Esophagus muscularis mucosa (tissue), 4 donors: ENCODE measurements at regions of chr6 and their contacts with region 1.

Region 1: DNA sequence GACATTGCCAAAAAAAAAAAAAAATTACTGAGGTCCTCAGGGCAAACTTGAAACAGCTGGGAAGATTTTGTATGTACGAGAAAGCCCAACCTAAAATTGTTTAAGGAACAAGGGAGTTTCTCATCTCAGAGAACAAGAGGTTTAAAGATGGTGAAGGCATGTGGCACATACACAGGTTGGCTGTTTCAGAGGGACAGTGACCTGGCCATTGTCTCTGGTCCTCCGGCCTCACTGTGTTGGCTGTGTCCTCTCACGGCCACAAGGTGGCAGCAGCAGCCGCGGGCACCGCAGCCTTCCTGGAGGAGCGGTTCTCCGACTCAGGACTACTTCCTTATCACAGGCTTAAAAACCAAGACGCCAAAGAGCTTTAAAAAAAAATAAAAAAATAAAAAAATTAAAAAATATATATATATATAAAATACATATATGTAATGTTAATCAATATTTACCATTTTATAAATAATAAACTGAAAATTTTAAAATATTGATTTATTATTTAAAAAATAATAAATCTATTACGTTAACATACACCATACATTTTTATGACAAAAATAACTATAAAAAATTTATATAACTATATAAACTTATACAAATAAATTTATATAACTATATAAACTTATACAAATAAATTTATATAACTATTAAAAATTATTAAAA is 52.8 kb downstream of the GTF2H5 start:
- DNase-seq: no peak
- H3K4me3 ChIP-seq: no peak overlapping the region
- H3K27ac ChIP-seq: no peak overlapping the region
- H3K4me1 ChIP-seq: no peaks in the 10 kb centered on the region
- H3K27me3 ChIP-seq: no peaks in the 10 kb centered on the region
- CTCF ChIP-seq: peak; percentile 90 to 94 (median 94)
- EP300 ChIP-seq: no peak
- POLR2A ChIP-seq: no peak

Region 2: GRCh38 chr6:158417760-158418098 is 196.8 kb after region 1 on chr6:
- intact Hi-C with region 1: no loop called
- DNase-seq: peak; percentile 5
- H3K4me3 ChIP-seq: no peak overlapping the region
- H3K27ac ChIP-seq: no peak overlapping the region
- H3K4me1 ChIP-seq: no peaks in the 10 kb centered on the region
- H3K27me3 ChIP-seq: no peaks in the 10 kb centered on the region
- CTCF ChIP-seq: no peak
- EP300 ChIP-seq: no peak
- POLR2A ChIP-seq: no peak

Region 3: DNA sequence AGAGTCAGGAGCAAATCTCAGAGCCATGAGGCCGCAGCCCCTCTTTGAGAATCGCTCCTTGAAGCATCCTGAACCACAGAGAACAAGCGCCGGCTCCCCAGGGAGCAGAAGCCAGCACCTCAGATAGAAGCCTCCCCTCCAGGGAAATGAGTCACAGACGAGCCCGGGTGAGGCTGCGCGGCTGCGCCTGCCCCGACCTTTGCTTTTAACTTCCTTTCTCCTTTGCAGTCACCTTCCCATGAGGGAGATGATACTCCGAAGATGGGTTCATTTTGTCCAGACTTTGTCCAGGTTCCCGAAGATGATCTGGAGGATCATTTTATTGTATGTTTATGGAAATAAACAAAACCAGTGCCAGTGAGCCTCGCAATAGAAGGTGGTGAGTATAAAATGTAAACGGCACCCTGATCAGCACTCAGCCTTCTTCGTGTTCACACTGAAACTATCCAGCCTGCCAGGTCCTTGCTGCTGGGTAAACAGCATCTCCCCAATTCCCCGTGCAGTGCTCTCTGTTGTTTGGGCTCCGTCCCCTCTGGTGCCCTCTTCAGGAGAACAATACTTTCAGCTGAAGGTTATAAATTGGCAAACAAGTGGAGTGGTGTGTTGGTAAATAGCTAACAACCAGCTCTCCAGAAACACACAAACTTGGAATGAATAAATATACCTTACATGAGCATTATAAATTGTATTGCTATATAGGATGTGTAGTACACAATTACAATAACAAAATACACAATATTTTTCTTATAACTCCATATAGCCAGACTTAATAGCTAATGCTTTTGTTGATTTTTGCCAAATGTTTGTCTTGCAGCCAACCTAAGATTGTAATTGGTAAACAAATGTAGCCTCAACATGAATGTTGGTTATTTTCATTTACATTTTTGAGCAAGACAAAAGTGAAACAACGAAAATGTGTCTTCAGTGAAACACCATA is 297.5 kb after region 1 on chr6:
- intact Hi-C with region 1: loop called (anchors 10 kb)
- DNase-seq: no peak
- H3K4me3 ChIP-seq: peak overlapping the region; percentile 5 to 41 (median 27)
- H3K27ac ChIP-seq: no peak overlapping the region
- H3K4me1 ChIP-seq: peaks cover 9 to 17% (median 13%) of the 10 kb centered on the region in 4 donors
- H3K27me3 ChIP-seq: peaks cover 0 to 64% (median 14%) of the 10 kb centered on the region in 4 donors
- CTCF ChIP-seq: peak; percentile 28 to 49 (median 38)
- EP300 ChIP-seq: no peak
- POLR2A ChIP-seq: no peak

Region 4: DNA sequence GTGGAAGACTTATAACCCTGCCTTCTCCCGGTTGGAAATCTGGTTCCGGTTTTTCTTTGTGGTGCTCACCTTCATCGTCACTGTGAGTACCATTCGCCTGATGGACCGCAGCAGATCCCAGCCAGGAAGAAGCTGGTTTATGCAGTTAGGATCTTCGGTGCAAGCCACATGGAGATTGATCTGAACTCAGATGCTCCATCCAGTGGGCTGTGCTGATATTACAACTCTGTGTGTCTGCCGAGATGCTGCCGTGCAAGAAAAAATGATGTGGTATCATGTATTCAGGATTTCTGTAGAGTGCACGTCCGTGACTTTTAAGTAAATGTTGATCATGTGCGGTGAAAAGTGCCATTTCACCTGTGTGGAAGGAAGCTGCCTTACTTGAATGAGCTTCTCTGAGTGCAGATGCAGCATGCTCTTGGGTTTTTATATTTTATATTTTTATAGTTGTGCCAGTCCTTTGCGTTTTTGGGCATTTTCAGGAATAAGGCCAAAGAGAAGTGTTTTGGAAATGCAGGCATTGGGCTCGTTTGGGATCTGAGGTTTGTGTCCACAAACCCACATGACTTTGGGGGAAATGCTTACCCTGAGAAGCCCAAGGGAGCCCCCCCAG is 384.5 kb after region 1 on chr6:
- intact Hi-C with region 1: loop called (anchors 5 kb)
- DNase-seq: no peak
- H3K4me3 ChIP-seq: no peak overlapping the region
- H3K27ac ChIP-seq: no peak overlapping the region
- H3K4me1 ChIP-seq: peaks cover 0 to 6% (median 2%) of the 10 kb centered on the region in 4 donors
- H3K27me3 ChIP-seq: no peaks in the 10 kb centered on the region
- CTCF ChIP-seq: peak; percentile 69 to 78 (median 74)
- EP300 ChIP-seq: no peak
- POLR2A ChIP-seq: no peak